T-cell (primary cell): ENCODE measurements at regions of chr16 and their contacts with region 1.

Region 1: DNA sequence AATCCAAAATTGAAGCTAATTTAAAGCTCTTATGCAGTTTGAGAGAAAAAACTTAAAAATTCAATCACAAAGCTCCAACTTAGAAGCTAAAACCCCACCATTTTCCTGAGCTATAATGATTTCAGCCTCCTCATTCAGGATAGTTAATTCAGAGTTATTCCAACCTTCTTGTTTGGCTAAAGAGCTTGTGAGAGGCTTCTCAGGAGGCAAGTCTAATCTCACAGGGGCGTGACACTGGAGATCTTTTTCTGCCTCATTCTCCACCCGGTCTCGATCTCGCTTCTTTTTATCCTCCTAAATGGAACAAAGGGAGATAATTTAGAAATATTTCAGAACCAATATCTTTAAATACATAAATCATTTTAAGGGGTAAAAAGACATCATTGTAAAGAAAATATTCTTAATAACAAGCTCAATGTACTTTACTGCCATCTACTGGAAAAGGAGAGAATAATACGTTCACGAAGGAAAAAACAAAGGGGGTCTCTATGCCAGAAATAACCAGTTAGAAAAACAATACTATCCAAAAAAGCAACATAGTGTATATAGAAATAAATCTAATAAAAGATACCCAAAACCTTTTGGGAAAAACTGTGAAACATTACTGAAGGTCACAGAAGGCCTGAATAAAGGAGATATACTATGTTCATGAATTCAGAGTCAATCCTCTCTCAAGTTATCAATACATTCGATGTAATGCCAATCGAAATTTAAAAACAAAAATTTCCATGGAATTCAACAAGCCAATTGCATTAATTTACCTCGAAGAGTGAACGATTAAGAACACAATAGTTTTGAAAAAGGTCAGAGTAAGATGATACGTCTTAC is 13.9 kb downstream of the BRD7 start:
- DNase-seq: peak in 2 of 35 experiments; percentile 34 to 51
- ATAC-seq: no peak
- H3K4me3 ChIP-seq: no peak overlapping the region
- H3K4me3 Mint-ChIP-seq: no peak overlapping the region
- H3K27ac ChIP-seq: no peak overlapping the region
- H3K27ac Mint-ChIP-seq: peak overlapping the region; percentile 0 to 64
- H3K4me1 ChIP-seq: no peaks in the 10 kb centered on the region
- H3K4me1 Mint-ChIP-seq: peaks cover 24 to 54% (median 25%) of the 10 kb centered on the region in 3 donors
- H3K27me3 ChIP-seq: no peaks in the 10 kb centered on the region
- H3K27me3 Mint-ChIP-seq: no peaks in the 10 kb centered on the region

Region 2: GRCh38 chr16:50338371-50339231 is 16.2 kb before region 1 on chr16:
- CTCF ChIA-PET with region 1: interaction called, 3 to 250 read pairs
- POLR2A ChIA-PET with region 1: interaction called in 1 of 2 experiments, 12 read pairs
- DNase-seq: peak in 16 of 35 experiments; percentile 12 to 77 (median 47)
- ATAC-seq: peak; percentile 29 to 78 (median 68)
- H3K4me3 ChIP-seq: no peak overlapping the region
- H3K4me3 Mint-ChIP-seq: peak overlapping the region; percentile 14 to 63 (median 21)
- H3K27ac ChIP-seq: peak overlapping the region; percentile 94
- H3K27ac Mint-ChIP-seq: peak overlapping the region; percentile 71 to 90
- H3K4me1 ChIP-seq: peaks cover 0 to 22% of the 10 kb centered on the region in 2 experiments
- H3K4me1 Mint-ChIP-seq: peaks cover 26 to 70% (median 47%) of the 10 kb centered on the region in 3 donors
- H3K27me3 ChIP-seq: no peaks in the 10 kb centered on the region
- H3K27me3 Mint-ChIP-seq: no peaks in the 10 kb centered on the region

Region 3: GRCh38 chr16:50368410-50369132 is 13.7 kb after region 1 on chr16 and contains the start of gene BRD7:
- CTCF ChIA-PET with region 1: interaction called, 4 to 14 read pairs
- POLR2A ChIA-PET with region 1: interaction called in 1 of 2 experiments, 3 read pairs
- DNase-seq: peak; percentile 45 to 88 (median 67)
- ATAC-seq: peak; percentile 78 to 92 (median 87)
- H3K4me3 ChIP-seq: peak within 1 kb of the TSS; percentile 56 to 86
- H3K4me3 Mint-ChIP-seq: peak within 1 kb of the TSS; percentile 83 to 88 (median 87)
- H3K27ac ChIP-seq: peak within 1 kb of the TSS; percentile 73
- H3K27ac Mint-ChIP-seq: peak within 1 kb of the TSS; percentile 93 to 96
- H3K4me1 ChIP-seq: peaks cover 20 to 21% of the 10 kb centered on the region in 2 experiments
- H3K4me1 Mint-ChIP-seq: peaks cover 51 to 63% (median 54%) of the 10 kb centered on the region in 3 donors
- H3K27me3 ChIP-seq: peaks cover 0 to 1% of the 10 kb centered on the region in 2 experiments
- H3K27me3 Mint-ChIP-seq: no peaks in the 10 kb centered on the region
- total RNA-seq, gene BRD7: 62.9 to 115 (median 75.4) TPM

Region 4: DNA sequence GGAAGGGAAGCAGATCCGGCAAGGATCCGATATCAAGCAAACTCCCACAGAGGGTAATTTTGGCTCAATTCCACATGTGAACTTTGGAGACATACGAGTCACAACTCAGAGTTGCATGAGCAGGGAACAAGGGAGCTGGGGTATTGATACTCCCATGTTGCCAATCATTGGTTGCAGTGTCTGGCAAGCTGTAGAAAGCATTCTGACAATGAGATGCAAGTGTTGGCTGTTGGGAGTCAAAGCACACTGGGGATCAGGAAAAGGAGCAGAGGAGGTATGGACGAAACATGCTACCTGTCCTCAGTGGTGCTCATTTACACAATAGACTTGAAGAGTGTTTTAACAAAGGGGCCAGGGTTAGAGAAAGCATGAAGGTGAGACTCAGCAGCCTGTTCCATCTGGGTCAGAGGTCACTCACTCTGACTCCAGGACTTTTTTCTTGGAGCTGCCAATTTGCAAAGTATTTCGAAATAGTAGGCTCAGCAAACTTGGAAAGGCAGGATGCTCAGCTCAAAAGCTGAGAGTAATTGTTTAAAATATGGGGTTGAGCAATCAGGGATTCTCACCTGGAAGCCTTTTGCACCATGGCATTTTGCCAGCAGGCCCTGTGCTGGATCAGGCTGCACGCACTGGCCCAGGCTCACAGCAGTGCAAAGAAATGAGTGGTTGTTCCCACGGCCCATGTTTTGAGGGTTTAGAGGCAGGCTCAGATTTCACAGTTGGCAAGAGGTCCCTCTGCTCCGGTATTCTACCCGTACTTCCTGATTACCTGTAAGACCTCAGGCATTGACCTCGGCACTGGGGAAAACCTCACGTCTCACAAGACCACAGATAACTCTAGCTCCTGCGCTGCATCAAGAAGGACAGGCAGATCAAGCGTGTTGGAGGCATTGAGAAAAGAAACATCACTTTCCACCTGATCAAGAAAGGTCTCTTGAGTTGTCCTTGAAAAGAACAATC is 175.7 kb after region 1 on chr16:
- CTCF ChIA-PET with region 1: no interaction called
- POLR2A ChIA-PET with region 1: no interaction called
- DNase-seq: peak in 1 of 35 experiments; percentile 19
- ATAC-seq: no peak
- H3K4me3 ChIP-seq: no peak overlapping the region
- H3K4me3 Mint-ChIP-seq: no peak overlapping the region
- H3K27ac ChIP-seq: no peak overlapping the region
- H3K27ac Mint-ChIP-seq: no peak overlapping the region
- H3K4me1 ChIP-seq: no peaks in the 10 kb centered on the region
- H3K4me1 Mint-ChIP-seq: no peaks in the 10 kb centered on the region
- H3K27me3 ChIP-seq: peaks cover 0 to 12% of the 10 kb centered on the region in 2 experiments
- H3K27me3 Mint-ChIP-seq: peaks cover 2 to 3% of the 10 kb centered on the region in 2 donors